Transverse colon (tissue), 4 donors: ENCODE measurements at regions of chr4 and their contacts with region 1.

Region 1: DNA sequence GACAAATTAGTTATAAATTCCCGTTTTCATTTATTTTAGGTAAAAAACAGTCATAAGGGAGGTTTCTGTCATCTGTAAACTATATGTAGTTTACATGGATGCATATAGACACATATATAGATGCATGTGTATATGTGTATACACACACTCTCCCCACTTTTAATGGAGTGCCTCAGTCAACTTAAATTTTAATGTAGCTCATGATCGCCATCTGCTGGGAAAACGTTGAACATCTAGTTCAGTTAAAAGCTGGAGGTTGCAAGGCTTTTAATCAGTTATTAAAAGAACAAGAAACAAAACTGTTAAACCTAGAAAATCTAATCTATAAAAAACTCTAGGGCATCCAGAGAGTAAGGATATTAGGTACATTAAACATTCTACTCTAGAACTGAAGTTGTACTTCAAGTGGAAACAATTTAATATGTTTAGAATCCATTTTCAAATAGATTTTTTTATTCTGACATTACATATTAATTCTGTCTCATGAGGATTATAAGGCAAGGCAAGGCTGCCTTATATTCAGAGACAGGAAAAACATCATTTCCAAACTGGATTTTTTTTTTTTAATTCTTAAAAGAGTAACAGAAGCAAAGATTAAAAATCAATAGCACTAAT is 122.6 kb downstream of the SHISA3 start:
- DNase-seq: peak; percentile 18
- H3K4me3 ChIP-seq: no peak overlapping the region
- H3K27ac ChIP-seq: no peak overlapping the region
- H3K4me1 ChIP-seq: no peaks in the 10 kb centered on the region
- H3K27me3 ChIP-seq: no peaks in the 10 kb centered on the region
- CTCF ChIP-seq: peak; percentile 54 to 64 (median 62)
- EP300 ChIP-seq: no peak
- POLR2A ChIP-seq: no peak

Region 2: GRCh38 chr4:42282081-42282901 is 237.6 kb before region 1 on chr4:
- in situ Hi-C with region 1: loop called (anchors 5 to 25 kb)
- intact Hi-C with region 1: loop called (anchors 5 kb)
- DNase-seq: no peak
- H3K4me3 ChIP-seq: no peak overlapping the region
- H3K27ac ChIP-seq: no peak overlapping the region
- H3K4me1 ChIP-seq: peaks cover 0 to 9% (median 0%) of the 10 kb centered on the region in 4 donors
- H3K27me3 ChIP-seq: no peaks in the 10 kb centered on the region
- CTCF ChIP-seq: peak; percentile 53 to 79 (median 70)
- EP300 ChIP-seq: no peak
- POLR2A ChIP-seq: no peak

Region 3: GRCh38 chr4:42806303-42806835 is 286.5 kb after region 1 on chr4:
- in situ Hi-C with region 1: no loop called
- intact Hi-C with region 1: no loop called
- DNase-seq: no peak
- H3K4me3 ChIP-seq: no peak overlapping the region
- H3K27ac ChIP-seq: no peak overlapping the region
- H3K4me1 ChIP-seq: no peaks in the 10 kb centered on the region
- H3K27me3 ChIP-seq: no peaks in the 10 kb centered on the region
- CTCF ChIP-seq: no peak
- EP300 ChIP-seq: no peak
- POLR2A ChIP-seq: no peak